T-cell (primary cell): ENCODE measurements at regions of chr2 and their contacts with region 1.

Region 1: GRCh38 chr2:64586883-64587481 is 62.9 kb downstream of the AFTPH start:
- DNase-seq: peak in 1 of 35 experiments; percentile 67
- ATAC-seq: peak in 2 of 4 experiments; percentile 48 to 50
- H3K4me3 ChIP-seq: no peak overlapping the region
- H3K4me3 Mint-ChIP-seq: no peak overlapping the region
- H3K27ac ChIP-seq: no peak overlapping the region
- H3K27ac Mint-ChIP-seq: peak overlapping the region in 1 of 2 donors; percentile 30
- H3K4me1 ChIP-seq: no peaks in the 10 kb centered on the region
- H3K4me1 Mint-ChIP-seq: peaks cover 0 to 3% (median 0%) of the 10 kb centered on the region in 3 donors
- H3K27me3 ChIP-seq: no peaks in the 10 kb centered on the region
- H3K27me3 Mint-ChIP-seq: no peaks in the 10 kb centered on the region

Region 2: DNA sequence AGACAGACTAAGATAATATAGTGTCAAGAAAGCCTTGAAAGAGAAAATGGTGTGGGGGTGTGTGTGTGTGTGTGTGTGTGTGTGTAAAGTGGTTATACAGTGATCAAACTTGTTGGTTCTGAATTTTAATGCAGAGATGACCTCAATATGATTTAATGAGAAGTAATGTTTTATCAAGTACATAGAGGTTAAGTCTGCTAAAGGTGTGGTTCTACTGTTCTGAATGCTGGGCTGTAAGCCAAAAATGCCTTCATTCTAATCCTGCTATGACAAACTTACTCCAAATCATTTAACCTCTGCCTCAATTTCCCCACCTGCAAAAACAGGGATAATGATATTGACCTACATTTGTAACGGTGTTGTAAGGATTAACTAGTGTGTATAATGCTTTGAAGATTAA is 1086.6 kb before region 1 on chr2:
- CTCF ChIA-PET with region 1: interaction called in 1 of 2 experiments, 11 read pairs
- POLR2A ChIA-PET with region 1: no interaction called
- DNase-seq: no peak
- ATAC-seq: no peak
- H3K4me3 ChIP-seq: no peak overlapping the region
- H3K4me3 Mint-ChIP-seq: no peak overlapping the region
- H3K27ac ChIP-seq: no peak overlapping the region
- H3K27ac Mint-ChIP-seq: no peak overlapping the region
- H3K4me1 ChIP-seq: no peaks in the 10 kb centered on the region
- H3K4me1 Mint-ChIP-seq: peaks cover 5 to 8% (median 5%) of the 10 kb centered on the region in 3 donors
- H3K27me3 ChIP-seq: no peaks in the 10 kb centered on the region
- H3K27me3 Mint-ChIP-seq: no peaks in the 10 kb centered on the region

Region 3: DNA sequence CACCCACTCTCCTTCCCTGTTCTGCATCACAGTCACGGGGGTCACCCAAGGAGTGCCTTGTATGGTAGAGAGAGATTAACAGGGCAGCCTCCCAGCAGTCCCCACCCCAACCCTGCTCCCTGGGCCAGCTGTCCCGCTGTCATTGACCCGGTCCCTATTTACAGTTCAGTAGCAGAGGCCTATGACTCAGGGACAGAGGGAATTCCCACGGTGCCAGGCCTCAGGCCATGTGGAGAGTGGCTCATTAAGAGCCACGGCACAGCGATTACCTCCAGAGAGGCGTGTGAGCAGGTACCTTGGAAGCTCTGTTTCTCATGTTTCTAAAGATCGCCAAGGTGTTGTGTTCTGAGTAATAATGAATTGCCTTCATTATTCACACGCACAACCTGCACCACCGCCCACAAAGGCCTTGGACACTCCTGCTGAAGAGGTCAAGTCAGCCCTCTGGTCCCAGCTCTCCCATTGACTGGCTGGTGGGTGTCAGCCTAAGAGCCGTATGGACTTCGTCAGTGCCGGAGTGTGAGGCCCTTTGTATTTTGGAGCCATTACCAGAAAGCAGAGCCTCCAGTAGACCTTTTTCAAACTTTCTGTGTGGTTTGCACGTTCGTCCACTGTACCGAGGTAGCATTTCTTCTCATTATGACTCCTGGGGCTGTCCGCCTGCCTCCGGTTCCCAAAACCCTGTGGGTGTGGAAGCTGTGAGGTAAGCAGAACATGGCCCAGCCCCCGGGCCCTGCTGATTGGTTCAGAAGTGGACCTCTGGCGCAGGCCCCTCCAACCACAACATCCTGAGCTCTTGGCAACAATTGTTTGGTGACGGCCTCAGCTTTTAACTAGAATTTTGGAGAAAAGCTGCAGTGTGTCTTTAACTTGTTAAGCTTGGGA is 19.7 kb after region 1 on chr2:
- CTCF ChIA-PET with region 1: interaction called, 7 to 22 read pairs
- POLR2A ChIA-PET with region 1: no interaction called
- DNase-seq: peak; percentile 58 to 94 (median 87)
- ATAC-seq: peak; percentile 87 to 95 (median 88)
- H3K4me3 ChIP-seq: peak overlapping the region in 1 of 2 donors; percentile 41
- H3K4me3 Mint-ChIP-seq: peak overlapping the region; percentile 63 to 80 (median 65)
- H3K27ac ChIP-seq: peak overlapping the region; percentile 47
- H3K27ac Mint-ChIP-seq: peak overlapping the region; percentile 15 to 74
- H3K4me1 ChIP-seq: peaks cover 8 to 38% of the 10 kb centered on the region in 2 experiments
- H3K4me1 Mint-ChIP-seq: peaks cover 21 to 38% (median 21%) of the 10 kb centered on the region in 3 donors
- H3K27me3 ChIP-seq: peaks cover 0 to 4% of the 10 kb centered on the region in 2 experiments
- H3K27me3 Mint-ChIP-seq: no peaks in the 10 kb centered on the region

Region 4: DNA sequence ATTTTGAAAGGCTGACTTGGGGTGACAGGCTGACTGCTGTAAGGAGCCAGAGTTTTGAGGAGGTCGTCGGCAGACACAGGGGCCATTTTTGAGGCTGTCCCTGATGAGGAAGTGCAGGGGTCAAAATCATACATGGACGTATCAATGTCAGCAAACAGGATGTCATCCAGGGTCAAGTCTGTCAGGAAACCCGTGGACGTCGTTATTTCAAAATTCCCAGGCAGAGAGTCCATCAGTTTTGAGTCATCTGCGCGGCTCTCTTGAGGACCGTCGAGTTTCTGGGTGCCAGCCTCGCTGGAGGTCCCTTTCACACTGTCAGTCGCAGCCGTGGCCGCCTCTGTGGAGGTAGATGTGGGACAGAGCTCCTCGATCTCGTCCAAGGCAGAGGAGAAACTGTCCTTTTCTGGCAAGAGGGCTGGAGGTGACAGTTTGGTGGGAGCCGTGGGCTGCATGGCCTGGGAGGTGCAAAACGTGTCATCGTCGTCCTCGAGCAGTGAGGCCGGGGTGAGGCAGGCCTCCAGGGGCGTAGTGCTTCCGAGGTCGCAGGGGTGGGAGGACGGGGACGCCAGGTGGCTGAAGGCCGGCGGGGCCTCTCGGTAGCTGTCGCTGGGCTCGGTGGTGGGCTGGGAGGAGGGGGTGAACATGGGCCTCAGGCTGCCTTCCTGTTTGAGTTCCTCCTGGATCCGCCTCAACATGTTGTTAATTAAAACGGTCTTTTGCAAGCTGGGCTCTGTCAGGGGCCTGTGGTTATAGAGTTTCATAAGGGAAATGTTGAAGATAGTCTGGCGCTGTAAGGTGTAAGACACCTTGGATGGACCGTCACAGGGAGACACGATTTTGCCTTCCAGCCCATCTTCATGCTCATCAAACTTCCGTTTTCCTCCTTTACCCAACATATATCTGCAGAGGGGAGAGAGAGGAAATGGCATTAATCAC is 49.3 kb after region 1 on chr2:
- CTCF ChIA-PET with region 1: no interaction called
- POLR2A ChIA-PET with region 1: interaction called in 1 of 2 experiments, 11 read pairs
- DNase-seq: peak in 2 of 35 experiments; percentile 5 to 28
- ATAC-seq: peak; percentile 45 to 65 (median 57)
- H3K4me3 ChIP-seq: no peak overlapping the region
- H3K4me3 Mint-ChIP-seq: peak overlapping the region; percentile 29 to 65 (median 52)
- H3K27ac ChIP-seq: peak overlapping the region; percentile 55
- H3K27ac Mint-ChIP-seq: peak overlapping the region; percentile 82 to 90
- H3K4me1 ChIP-seq: peaks cover 33% of the 10 kb centered on the region in 2 experiments
- H3K4me1 Mint-ChIP-seq: peaks cover 52 to 57% (median 53%) of the 10 kb centered on the region in 3 donors
- H3K27me3 ChIP-seq: no peaks in the 10 kb centered on the region
- H3K27me3 Mint-ChIP-seq: no peaks in the 10 kb centered on the region

Region 5: GRCh38 chr2:64831134-64831976 is 244.4 kb after region 1 on chr2:
- CTCF ChIA-PET with region 1: interaction called, 4 to 18 read pairs
- POLR2A ChIA-PET with region 1: no interaction called
- DNase-seq: peak; percentile 44 to 88 (median 76)
- ATAC-seq: peak; percentile 87 to 89 (median 88)
- H3K4me3 ChIP-seq: peak overlapping the region in 1 of 2 donors; percentile 11
- H3K4me3 Mint-ChIP-seq: peak overlapping the region; percentile 18 to 47 (median 21)
- H3K27ac ChIP-seq: peak overlapping the region; percentile 8
- H3K27ac Mint-ChIP-seq: peak overlapping the region in 1 of 2 donors; percentile 20
- H3K4me1 ChIP-seq: peaks cover 0 to 10% of the 10 kb centered on the region in 2 experiments
- H3K4me1 Mint-ChIP-seq: peaks cover 0 to 11% (median 10%) of the 10 kb centered on the region in 3 donors
- H3K27me3 ChIP-seq: peaks cover 0 to 6% of the 10 kb centered on the region in 2 experiments
- H3K27me3 Mint-ChIP-seq: peaks cover 3 to 10% of the 10 kb centered on the region in 2 donors

Region 6: DNA sequence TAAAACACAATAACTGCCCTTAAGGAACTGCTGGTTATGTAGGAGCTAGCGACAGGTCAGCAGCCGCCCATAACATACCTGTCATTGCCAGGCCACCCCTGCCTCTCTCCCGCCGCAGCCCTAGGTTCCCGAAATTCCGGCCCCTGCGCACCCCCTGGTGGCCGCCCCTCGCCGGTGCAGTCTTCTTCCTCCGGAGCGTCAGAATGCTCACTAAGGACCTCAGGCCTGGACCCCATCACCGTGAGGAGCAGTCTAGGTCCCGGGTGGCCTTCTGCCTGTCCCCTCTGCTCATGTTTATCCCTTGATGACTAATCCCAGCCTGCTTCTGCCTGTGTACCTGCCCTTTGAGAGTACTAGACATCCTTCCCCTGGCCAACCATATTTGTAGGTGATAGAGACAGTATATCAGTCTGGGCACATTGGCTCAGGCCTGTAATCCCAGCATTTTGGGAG is 286.5 kb after region 1 on chr2:
- CTCF ChIA-PET with region 1: interaction called, 8 to 12 read pairs
- POLR2A ChIA-PET with region 1: no interaction called
- DNase-seq: peak; percentile 28 to 83 (median 71)
- ATAC-seq: peak; percentile 88 to 97 (median 96)
- H3K4me3 ChIP-seq: no peak overlapping the region
- H3K4me3 Mint-ChIP-seq: peak overlapping the region in 2 of 3 donors; percentile 2 to 18
- H3K27ac ChIP-seq: no peak overlapping the region
- H3K27ac Mint-ChIP-seq: no peak overlapping the region
- H3K4me1 ChIP-seq: peaks cover 2 to 10% of the 10 kb centered on the region in 2 experiments
- H3K4me1 Mint-ChIP-seq: peaks cover 0 to 6% (median 5%) of the 10 kb centered on the region in 3 donors
- H3K27me3 ChIP-seq: peaks cover 0 to 10% of the 10 kb centered on the region in 2 experiments
- H3K27me3 Mint-ChIP-seq: peaks cover 0 to 2% of the 10 kb centered on the region in 2 donors

Region 7: GRCh38 chr2:65279756-65280155 is 692.8 kb after region 1 on chr2:
- CTCF ChIA-PET with region 1: no interaction called
- POLR2A ChIA-PET with region 1: no interaction called
- DNase-seq: no peak
- ATAC-seq: no peak
- H3K4me3 ChIP-seq: no peak overlapping the region
- H3K4me3 Mint-ChIP-seq: no peak overlapping the region
- H3K27ac ChIP-seq: no peak overlapping the region
- H3K27ac Mint-ChIP-seq: no peak overlapping the region
- H3K4me1 ChIP-seq: peaks cover 8 to 13% of the 10 kb centered on the region in 2 experiments
- H3K4me1 Mint-ChIP-seq: peaks cover 8 to 16% (median 13%) of the 10 kb centered on the region in 3 donors
- H3K27me3 ChIP-seq: no peaks in the 10 kb centered on the region
- H3K27me3 Mint-ChIP-seq: no peaks in the 10 kb centered on the region